Posterior vena cava (tissue), 2 donors: ENCODE measurements at regions of chr21 and their contacts with region 1.

Region 1: GRCh38 chr21:36542312-36543107 is 62.6 kb upstream of the CLDN14 start:
- DNase-seq: peak; percentile 40

Region 2: DNA sequence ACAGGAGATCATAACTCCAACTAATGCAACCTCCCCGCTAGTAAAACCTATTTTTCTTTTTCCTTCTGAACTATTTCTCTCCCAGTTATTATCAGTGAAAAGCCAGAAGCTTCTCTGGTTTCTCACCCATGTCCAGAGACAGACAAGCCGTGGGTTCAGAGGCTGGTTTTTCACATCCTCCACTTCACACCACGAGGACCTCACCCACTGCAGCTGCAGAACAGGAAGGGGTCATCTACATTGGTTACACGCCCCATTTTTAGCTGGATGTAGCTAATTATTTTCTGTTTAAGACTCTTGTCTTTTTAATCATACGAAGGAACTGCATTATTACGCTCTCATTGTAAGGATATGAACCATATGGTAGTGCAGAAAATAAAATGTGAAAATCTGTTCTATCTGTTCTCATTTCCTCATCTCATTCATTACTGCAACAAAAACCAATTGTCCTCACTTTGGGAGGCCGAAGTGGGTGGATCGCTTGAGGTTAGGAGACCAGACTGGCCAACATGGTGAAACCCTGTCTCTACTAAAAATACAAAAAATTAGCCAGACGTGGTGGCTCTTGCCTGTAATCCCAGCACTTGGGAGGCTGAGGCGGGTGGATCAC is 23.5 kb before region 1 on chr21:
- intact Hi-C with region 1: loop called in 1 of 2 experiments (anchors 1 kb)
- DNase-seq: no peak

Region 3: GRCh38 chr21:36555199-36555800 is 12.8 kb after region 1 on chr21:
- intact Hi-C with region 1: no loop called
- DNase-seq: no peak

Region 4: DNA sequence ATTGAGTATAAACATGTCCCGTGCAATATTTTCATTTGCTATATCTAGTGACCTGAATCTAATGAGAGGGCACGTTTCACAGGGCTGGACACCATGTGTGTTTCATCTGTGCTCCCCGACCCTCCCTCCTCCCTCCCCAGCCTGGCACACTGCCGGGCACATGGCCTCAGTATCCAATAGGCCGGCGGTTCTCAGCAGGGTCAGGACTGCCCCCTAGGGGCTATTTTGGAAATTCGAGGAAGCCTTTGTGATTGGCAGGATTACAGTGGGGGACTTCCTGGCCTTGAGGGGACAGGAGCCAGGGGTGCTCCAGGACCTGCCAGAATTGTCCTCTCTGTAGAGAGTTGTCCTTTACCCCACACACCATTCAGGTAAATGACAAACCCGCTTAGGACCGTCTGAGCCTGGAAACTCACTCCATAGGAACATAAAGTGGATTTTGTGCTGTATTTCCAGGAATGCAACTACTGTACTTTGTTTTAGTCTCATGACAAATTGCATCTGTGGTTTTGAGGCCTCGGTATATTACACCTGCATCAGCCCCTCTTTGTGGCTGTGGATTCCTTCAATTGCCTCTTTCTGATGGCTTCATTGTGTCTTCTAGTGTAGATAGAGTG is 47.0 kb after region 1 on chr21:
- intact Hi-C with region 1: loop called in 1 of 2 experiments (anchors 1 kb)
- DNase-seq: no peak